ENCODE measurements at regions of chr12 and their contacts with region 1.

Region 1: GRCh38 chr12:54279866-54280467 is at the start of gene CBX5:
- DNase-seq: peak; percentile 99
- H3K4me3 Mint-ChIP-seq: no peak within 1 kb of the TSS
- H3K27ac Mint-ChIP-seq: no peak within 1 kb of the TSS
- H3K4me1 Mint-ChIP-seq: peaks cover 51% of the 10 kb centered on the region
- H3K27me3 Mint-ChIP-seq: no peaks in the 10 kb centered on the region
- total RNA-seq, gene CBX5: 132 to 138 TPM

Region 2: GRCh38 chr12:54214553-54215406 is 65.2 kb before region 1 on chr12:
- CTCF ChIA-PET with region 1: interaction called, 4 read pairs
- POLR2A ChIA-PET with region 1: no interaction called
- intact Hi-C with region 1: loop called (anchors 2 kb)
- DNase-seq: peak; percentile 94
- H3K4me3 Mint-ChIP-seq: peak overlapping the region; percentile 70
- H3K27ac Mint-ChIP-seq: no peak overlapping the region
- H3K4me1 Mint-ChIP-seq: peaks cover 20% of the 10 kb centered on the region
- H3K27me3 Mint-ChIP-seq: no peaks in the 10 kb centered on the region

Region 3: DNA sequence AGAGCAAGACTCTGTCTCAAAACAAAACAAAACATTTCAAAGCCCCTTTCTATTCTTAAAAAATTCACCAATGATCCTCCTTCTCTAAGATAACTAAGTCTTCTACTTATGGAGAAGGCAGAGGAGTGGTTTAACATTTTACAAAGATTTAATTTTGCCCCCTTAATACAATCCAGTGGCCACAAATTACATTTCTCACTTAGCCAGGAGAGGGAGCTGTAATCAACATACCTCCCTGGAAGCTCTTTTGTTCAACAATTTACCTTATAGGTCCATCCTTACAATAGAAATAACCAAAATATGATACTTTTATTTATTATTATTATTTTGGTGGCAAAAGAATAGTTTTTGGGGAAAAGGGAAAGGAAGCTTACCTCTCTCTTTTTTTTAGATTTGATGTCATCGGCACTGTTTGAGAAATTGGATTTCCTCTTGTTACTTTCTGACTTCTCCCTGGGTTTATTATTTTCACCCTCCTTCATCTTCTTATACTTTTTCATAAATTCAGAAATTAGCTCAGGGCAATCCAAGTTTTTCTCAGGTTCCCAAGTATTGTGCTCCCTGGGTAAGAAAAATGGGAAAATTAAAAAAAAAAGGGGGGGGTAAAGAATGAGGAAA is 28.2 kb before region 1 on chr12:
- CTCF ChIA-PET with region 1: interaction called, 17 read pairs
- POLR2A ChIA-PET with region 1: interaction called, 6 read pairs
- intact Hi-C with region 1: no loop called
- DNase-seq: no peak
- H3K4me3 Mint-ChIP-seq: no peak overlapping the region
- H3K27ac Mint-ChIP-seq: no peak overlapping the region
- H3K4me1 Mint-ChIP-seq: peaks cover 9% of the 10 kb centered on the region
- H3K27me3 Mint-ChIP-seq: no peaks in the 10 kb centered on the region

Region 4: GRCh38 chr12:54324617-54325441 is 44.9 kb after region 1 on chr12 and contains the start of gene COPZ1:
- CTCF ChIA-PET with region 1: interaction called, 13 read pairs
- POLR2A ChIA-PET with region 1: interaction called, 4 read pairs
- intact Hi-C with region 1: loop called (anchors 1 kb)
- DNase-seq: peak; percentile 97
- H3K4me3 Mint-ChIP-seq: peak within 1 kb of the TSS; percentile 95
- H3K27ac Mint-ChIP-seq: peak within 1 kb of the TSS; percentile 84
- H3K4me1 Mint-ChIP-seq: peaks cover 33% of the 10 kb centered on the region
- H3K27me3 Mint-ChIP-seq: no peaks in the 10 kb centered on the region
- total RNA-seq, gene COPZ1: 99.0 to 110 TPM

Region 5: GRCh38 chr12:54497883-54498282 is 217.9 kb after region 1 on chr12:
- CTCF ChIA-PET with region 1: no interaction called
- POLR2A ChIA-PET with region 1: no interaction called
- intact Hi-C with region 1: loop called (anchors 1 kb)
- DNase-seq: no peak
- H3K4me3 Mint-ChIP-seq: peak overlapping the region; percentile 100
- H3K27ac Mint-ChIP-seq: peak overlapping the region; percentile 98
- H3K4me1 Mint-ChIP-seq: peaks cover 40% of the 10 kb centered on the region
- H3K27me3 Mint-ChIP-seq: no peaks in the 10 kb centered on the region

Region 6: GRCh38 chr12:54984658-54985376 is 704.9 kb after region 1 on chr12 and contains the start of gene TESPA1:
- CTCF ChIA-PET with region 1: no interaction called
- POLR2A ChIA-PET with region 1: no interaction called
- intact Hi-C with region 1: loop called (anchors 10 kb)
- DNase-seq: peak; percentile 93
- H3K4me3 Mint-ChIP-seq: peak within 1 kb of the TSS; percentile 79
- H3K27ac Mint-ChIP-seq: peak within 1 kb of the TSS; percentile 90
- H3K4me1 Mint-ChIP-seq: peaks cover 68% of the 10 kb centered on the region
- H3K27me3 Mint-ChIP-seq: no peaks in the 10 kb centered on the region
- total RNA-seq, gene TESPA1: 73.9 to 74.8 TPM

Measured in activated CD4-positive, alpha-beta memory T cell treated with anti-CD3 and anti-CD28 coated beads for 36 hours (primary cell).